ENCODE measurements at regions of chr3 and their contacts with region 1.

Region 1: DNA sequence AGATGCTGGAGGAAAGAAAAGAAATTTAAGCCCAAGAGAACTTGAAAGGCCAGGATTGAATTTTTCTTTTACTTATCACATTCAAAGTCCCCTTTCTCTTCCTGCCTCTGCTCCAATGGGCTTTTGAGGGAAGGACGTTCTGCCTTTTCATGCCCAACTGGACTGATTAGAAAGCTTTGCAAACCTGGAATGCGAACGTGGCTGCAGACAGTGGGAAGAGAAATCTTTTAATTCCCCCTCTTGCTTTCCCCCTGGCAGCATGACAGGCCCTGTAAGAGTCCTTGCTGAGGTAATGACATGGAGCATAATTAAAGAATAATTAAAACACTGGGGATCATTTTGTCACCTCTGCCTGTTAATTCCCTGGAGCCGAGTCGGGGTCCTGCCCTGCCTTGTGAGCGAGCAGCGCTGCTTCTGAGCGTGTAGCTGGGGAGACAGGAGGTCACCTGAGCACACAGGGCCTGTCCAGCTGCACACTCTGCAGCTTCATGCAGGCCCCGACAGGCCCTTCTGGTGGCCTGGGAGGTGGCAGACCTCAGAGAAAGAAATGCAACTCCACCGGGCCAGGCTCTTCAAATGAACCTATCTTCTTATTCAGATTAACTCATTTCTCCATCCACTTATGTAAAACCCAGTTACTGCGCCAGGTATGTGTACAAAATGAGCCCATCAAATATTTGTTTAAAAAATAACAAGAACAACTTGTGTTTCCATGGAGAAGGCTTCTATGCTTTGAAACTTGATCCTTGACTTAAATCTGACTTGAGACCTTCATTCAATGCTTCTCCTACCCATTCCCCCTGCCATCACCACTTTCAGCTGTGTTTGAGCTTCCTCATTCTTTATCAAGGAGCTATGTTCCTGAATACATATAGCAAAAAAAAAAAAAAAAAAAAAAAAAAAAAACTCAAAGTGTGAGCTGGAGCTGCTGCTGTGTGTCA is 628.2 kb upstream of the CFAP20DC start:
- DNase-seq: no peak
- ATAC-seq: no peak
- H3K4me3 ChIP-seq: no peak overlapping the region
- H3K27ac ChIP-seq: no peak overlapping the region
- H3K4me1 ChIP-seq: no peaks in the 10 kb centered on the region
- H3K27me3 ChIP-seq: no peaks in the 10 kb centered on the region
- CTCF ChIP-seq: no peak

Region 2: GRCh38 chr3:58568572-58569286 is 1109.3 kb before region 1 on chr3:
- intact Hi-C with region 1: loop called in 1 of 10 experiments (anchors 10 kb)
- DNase-seq: peak; percentile 74 to 80
- ATAC-seq: peak; percentile 30 to 75 (median 50)
- H3K4me3 ChIP-seq: no peak overlapping the region
- H3K27ac ChIP-seq: peak overlapping the region in 1 of 10 donors; percentile 27
- H3K4me1 ChIP-seq: peaks cover 4 to 42% (median 32%) of the 10 kb centered on the region in 9 donors
- H3K27me3 ChIP-seq: no peaks in the 10 kb centered on the region
- CTCF ChIP-seq: peak; percentile 91 to 96 (median 95)

Region 3: DNA sequence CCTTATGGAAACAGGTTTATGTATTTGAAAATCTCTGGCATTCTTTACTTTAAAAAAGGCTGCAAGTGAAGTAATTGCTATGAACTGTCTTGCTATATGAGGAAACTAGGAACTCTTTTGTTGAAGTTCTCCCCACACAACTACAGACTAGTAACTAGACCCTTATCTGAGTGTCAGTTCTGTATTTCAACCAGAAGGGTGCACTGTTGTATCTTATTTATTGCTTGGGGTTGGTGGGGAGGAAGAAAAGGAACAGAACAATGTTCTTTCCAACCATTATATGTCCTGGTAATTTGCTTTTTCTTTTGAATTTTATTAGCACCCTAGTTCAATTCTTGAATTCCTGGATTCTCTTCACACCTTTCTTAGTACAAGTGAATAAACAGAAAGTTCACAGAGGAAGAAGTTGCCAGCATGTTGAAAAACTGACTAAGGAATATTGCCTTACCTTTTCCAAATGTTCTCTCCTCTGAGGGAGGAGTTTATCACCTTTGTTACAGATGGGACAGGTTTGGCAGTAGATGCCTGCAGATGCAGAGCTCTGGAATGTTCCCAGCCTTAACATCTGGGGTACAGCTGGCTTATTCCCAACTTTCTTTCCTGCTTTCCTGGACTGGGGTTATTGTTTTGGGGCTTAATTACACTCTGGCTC is 465.8 kb before region 1 on chr3:
- intact Hi-C with region 1: no loop called
- DNase-seq: no peak
- ATAC-seq: peak in 7 of 8 donors; percentile 52 to 76 (median 61)
- H3K4me3 ChIP-seq: no peak overlapping the region
- H3K27ac ChIP-seq: no peak overlapping the region
- H3K4me1 ChIP-seq: no peaks in the 10 kb centered on the region
- H3K27me3 ChIP-seq: peaks cover 0 to 4% (median 0%) of the 10 kb centered on the region in 7 donors
- CTCF ChIP-seq: peak; percentile 38 to 73 (median 64)

Region 4: GRCh38 chr3:59717679-59718205 is 39.7 kb after region 1 on chr3:
- intact Hi-C with region 1: no loop called
- DNase-seq: no peak
- ATAC-seq: no peak
- H3K4me3 ChIP-seq: no peak overlapping the region
- H3K27ac ChIP-seq: no peak overlapping the region
- H3K4me1 ChIP-seq: no peaks in the 10 kb centered on the region
- H3K27me3 ChIP-seq: peaks cover 0 to 4% (median 0%) of the 10 kb centered on the region in 7 donors
- CTCF ChIP-seq: no peak

Region 5: GRCh38 chr3:59766200-59766872 is 88.3 kb after region 1 on chr3:
- intact Hi-C with region 1: no loop called
- DNase-seq: no peak
- ATAC-seq: peak in 3 of 8 donors; percentile 57 to 80 (median 76)
- H3K4me3 ChIP-seq: no peak overlapping the region
- H3K27ac ChIP-seq: peak overlapping the region in 1 of 10 donors; percentile 44
- H3K4me1 ChIP-seq: no peaks in the 10 kb centered on the region
- H3K27me3 ChIP-seq: no peaks in the 10 kb centered on the region
- CTCF ChIP-seq: no peak